ENCODE measurements at regions of chr11 and their contacts with region 1.

Region 1: DNA sequence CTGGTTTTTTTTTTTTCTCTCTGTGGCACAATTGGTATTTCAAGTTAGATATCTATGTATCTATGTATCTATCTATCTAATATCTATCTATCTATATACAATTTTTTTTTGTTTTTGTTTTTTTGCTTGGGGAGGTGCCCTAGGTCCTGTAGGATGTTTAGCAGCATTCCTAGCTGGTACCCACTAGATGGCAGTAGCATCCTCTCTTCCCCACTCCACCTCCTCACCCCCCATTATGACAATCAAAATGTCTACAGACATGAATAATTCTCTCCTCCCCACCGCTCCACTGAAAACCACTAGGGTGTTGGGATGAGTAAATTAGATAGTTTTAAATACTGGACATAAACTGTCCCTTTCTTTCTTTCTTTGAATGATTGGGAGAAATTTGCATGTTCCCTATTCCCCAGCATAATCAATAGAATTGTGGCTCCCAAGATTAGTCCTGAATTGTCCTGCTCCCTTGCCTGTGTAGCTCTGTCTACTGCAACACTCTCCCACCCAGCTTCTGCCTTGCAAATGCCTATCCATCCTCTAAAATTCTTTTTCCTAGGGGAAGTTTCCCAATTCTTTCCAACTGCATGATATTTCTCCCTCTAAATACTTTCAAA is 1152.4 kb downstream of the LRRC4C start:
- DNase-seq: peak; percentile 64
- H3K4me3 ChIP-seq: no peak overlapping the region
- H3K27ac ChIP-seq: no peak overlapping the region
- H3K4me1 ChIP-seq: peaks cover 6% of the 10 kb centered on the region
- H3K27me3 ChIP-seq: no peaks in the 10 kb centered on the region
- CTCF ChIP-seq: peak; percentile 63 to 75
- POLR2A ChIP-seq: no peak

Region 2: DNA sequence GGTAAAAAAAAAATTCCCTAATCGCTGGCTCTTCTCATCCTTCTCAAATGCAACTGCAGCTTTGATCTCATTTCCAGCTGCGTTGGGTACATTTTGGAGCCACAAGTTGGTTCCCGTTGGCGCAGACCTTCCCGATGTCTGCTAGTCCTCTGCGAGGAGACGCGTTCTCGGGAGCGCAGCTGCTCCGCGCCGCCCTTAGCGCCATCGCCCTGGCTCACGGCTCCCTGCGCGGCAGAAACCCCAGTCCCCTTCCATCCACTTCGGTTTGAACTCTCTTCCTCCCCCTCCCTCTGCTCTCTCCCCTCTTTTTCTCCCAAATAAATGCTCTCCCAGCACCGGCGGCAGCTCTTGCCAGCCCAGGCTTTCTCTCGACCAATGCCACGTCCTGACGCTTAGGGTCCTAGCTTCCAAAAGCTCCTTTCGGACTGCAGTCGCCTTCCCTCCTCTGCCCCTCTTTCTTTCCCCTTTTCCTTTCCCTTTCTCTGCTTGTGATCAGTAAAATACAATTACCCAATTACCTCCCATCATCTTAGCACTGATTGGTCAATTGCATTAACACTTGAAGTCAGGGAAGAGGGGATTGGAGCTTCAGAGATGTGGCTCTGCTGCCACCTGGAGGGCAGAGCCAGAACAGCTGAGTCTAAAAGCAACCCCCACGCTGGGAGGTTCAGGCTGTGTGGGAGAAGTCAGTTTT is 13.2 kb before region 1 on chr11:
- CTCF ChIA-PET with region 1: interaction called, 15 read pairs
- POLR2A ChIA-PET with region 1: no interaction called
- dilution Hi-C with region 1: no loop called
- intact Hi-C with region 1: no loop called
- DNase-seq: peak; percentile 87
- H3K4me3 ChIP-seq: peak overlapping the region; percentile 32 to 56 (median 54)
- H3K27ac ChIP-seq: no peak overlapping the region
- H3K4me1 ChIP-seq: no peaks in the 10 kb centered on the region
- H3K27me3 ChIP-seq: peaks cover 16 to 17% of the 10 kb centered on the region in 2 experiments
- CTCF ChIP-seq: peak; percentile 88 to 91
- POLR2A ChIP-seq: no peak

Region 3: DNA sequence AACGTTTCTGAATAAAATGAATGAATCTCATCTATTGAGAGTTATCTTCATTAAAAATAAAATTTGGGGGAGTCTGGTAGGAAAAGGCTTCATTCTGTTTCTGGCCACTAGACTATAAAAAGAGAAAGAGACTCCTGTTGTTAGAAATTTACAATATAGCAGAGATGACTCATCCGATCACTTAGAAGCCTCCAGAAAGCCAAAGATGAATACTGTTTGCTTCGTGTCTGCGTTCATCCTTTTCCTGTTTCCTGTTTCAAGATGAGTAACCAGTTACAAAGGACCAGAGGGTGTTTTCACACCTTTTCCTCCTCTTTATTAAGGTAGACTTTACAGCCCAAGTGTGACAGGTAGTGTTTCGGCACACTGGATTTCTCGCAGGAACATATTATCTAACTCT is 31.7 kb after region 1 on chr11:
- CTCF ChIA-PET with region 1: no interaction called
- POLR2A ChIA-PET with region 1: no interaction called
- dilution Hi-C with region 1: no loop called
- intact Hi-C with region 1: no loop called
- DNase-seq: peak; percentile 82
- H3K4me3 ChIP-seq: no peak overlapping the region
- H3K27ac ChIP-seq: peak overlapping the region; percentile 79
- H3K4me1 ChIP-seq: peaks cover 28% of the 10 kb centered on the region
- H3K27me3 ChIP-seq: no peaks in the 10 kb centered on the region
- CTCF ChIP-seq: no peak
- POLR2A ChIP-seq: no peak

Region 4: GRCh38 chr11:40354121-40354520 is 47.1 kb after region 1 on chr11:
- CTCF ChIA-PET with region 1: no interaction called
- POLR2A ChIA-PET with region 1: no interaction called
- dilution Hi-C with region 1: no loop called
- intact Hi-C with region 1: no loop called
- DNase-seq: no peak
- H3K4me3 ChIP-seq: no peak overlapping the region
- H3K27ac ChIP-seq: no peak overlapping the region
- H3K4me1 ChIP-seq: no peaks in the 10 kb centered on the region
- H3K27me3 ChIP-seq: no peaks in the 10 kb centered on the region
- CTCF ChIP-seq: no peak
- POLR2A ChIP-seq: no peak

Region 5: GRCh38 chr11:40401132-40401853 is 94.2 kb after region 1 on chr11:
- CTCF ChIA-PET with region 1: interaction called, 5 read pairs
- POLR2A ChIA-PET with region 1: no interaction called
- dilution Hi-C with region 1: no loop called
- intact Hi-C with region 1: loop called (anchors 5 kb)
- DNase-seq: no peak
- H3K4me3 ChIP-seq: no peak overlapping the region
- H3K27ac ChIP-seq: no peak overlapping the region
- H3K4me1 ChIP-seq: no peaks in the 10 kb centered on the region
- H3K27me3 ChIP-seq: no peaks in the 10 kb centered on the region
- CTCF ChIP-seq: no peak
- POLR2A ChIP-seq: no peak

Region 6: GRCh38 chr11:41201156-41201555 is 894.1 kb after region 1 on chr11:
- CTCF ChIA-PET with region 1: interaction called, 5 read pairs
- POLR2A ChIA-PET with region 1: no interaction called
- dilution Hi-C with region 1: no loop called
- intact Hi-C with region 1: loop called (anchors 1 kb)
- DNase-seq: no peak
- H3K4me3 ChIP-seq: no peak overlapping the region
- H3K27ac ChIP-seq: no peak overlapping the region
- H3K4me1 ChIP-seq: no peaks in the 10 kb centered on the region
- H3K27me3 ChIP-seq: no peaks in the 10 kb centered on the region
- CTCF ChIP-seq: peak; percentile 11
- POLR2A ChIP-seq: no peak

Region 7: GRCh38 chr11:41498726-41499125 is 1191.7 kb after region 1 on chr11:
- CTCF ChIA-PET with region 1: no interaction called
- POLR2A ChIA-PET with region 1: no interaction called
- dilution Hi-C with region 1: no loop called
- intact Hi-C with region 1: loop called (anchors 5 kb)
- DNase-seq: peak; percentile 26
- H3K4me3 ChIP-seq: no peak overlapping the region
- H3K27ac ChIP-seq: no peak overlapping the region
- H3K4me1 ChIP-seq: no peaks in the 10 kb centered on the region
- H3K27me3 ChIP-seq: no peaks in the 10 kb centered on the region
- CTCF ChIP-seq: peak in 1 of 2 donors; percentile 4
- POLR2A ChIP-seq: no peak

Measured in endothelial cell of umbilical vein (primary cell).